Left lung (tissue), 14 donors: ENCODE measurements at regions of chr15 and their contacts with region 1.

Region 1: GRCh38 chr15:71437404-71438318 is 322.4 kb downstream of the THSD4 start:
- DNase-seq: peak in 1 of 4 donors; percentile 67
- ATAC-seq: peak; percentile 96
- H3K4me3 ChIP-seq: no peak overlapping the region
- H3K27ac ChIP-seq: peak overlapping the region; percentile 6 to 36
- H3K4me1 ChIP-seq: peaks cover 5 to 13% of the 10 kb centered on the region in 2 donors
- H3K27me3 ChIP-seq: no peaks in the 10 kb centered on the region
- CTCF ChIP-seq: no peak

Region 2: GRCh38 chr15:70892002-70892914 is 545.4 kb before region 1 on chr15 and contains the starts of genes LRRC49 and THAP10:
- intact Hi-C with region 1: no loop called
- DNase-seq: peak; percentile 87 to 94 (median 91)
- ATAC-seq: peak; percentile 96
- H3K4me3 ChIP-seq: peak within 1 kb of the TSS; percentile 61 to 97
- H3K27ac ChIP-seq: peak within 1 kb of the TSS; percentile 48 to 70
- H3K4me1 ChIP-seq: peaks cover 0 to 13% of the 10 kb centered on the region in 2 donors
- H3K27me3 ChIP-seq: peaks cover 0 to 8% of the 10 kb centered on the region in 2 donors
- CTCF ChIP-seq: no peak
- polyA plus RNA-seq, gene LRRC49: 17.5 to 24.1 (median 20.0) TPM
- polyA plus RNA-seq, gene THAP10: 5.3 to 7.6 (median 6.2) TPM

Region 3: DNA sequence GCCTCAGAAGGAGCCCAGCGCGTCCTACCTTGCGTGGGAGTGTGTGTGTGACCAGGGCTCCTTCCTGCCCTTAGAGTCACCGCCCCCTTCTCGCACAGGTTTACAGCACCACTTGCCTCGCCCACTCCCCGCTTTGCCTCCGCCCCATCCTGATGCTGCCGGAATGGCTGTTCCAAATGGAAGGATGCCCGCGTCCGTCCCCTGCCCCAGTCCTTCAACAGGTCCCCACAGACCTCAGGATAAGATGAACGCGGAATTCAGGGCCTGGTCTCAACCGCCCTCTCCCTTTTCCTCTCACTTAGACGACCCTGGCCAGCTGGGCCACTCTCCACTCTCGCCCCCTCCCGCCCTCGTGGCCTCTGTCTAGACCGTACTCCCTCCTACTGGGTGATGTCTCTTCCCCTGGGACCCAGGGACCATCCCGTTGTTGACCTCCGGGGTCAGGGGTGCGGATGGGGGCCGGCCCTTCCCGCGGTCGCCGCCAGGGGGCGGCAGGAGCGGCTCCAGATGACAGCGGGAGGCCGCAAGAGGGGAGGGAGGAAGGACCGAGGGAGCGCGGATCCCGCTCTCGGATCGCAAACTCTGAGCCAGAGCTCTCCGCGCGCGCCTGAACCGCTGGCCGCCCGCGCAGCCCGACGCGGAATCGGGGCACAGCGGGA is 322.6 kb before region 1 on chr15 and contains the start of gene THSD4:
- intact Hi-C with region 1: loop called in 1 of 2 experiments (anchors 5 kb)
- DNase-seq: peak; percentile 81 to 90 (median 84)
- ATAC-seq: peak; percentile 83
- H3K4me3 ChIP-seq: peak within 1 kb of the TSS; percentile 38 to 57
- H3K27ac ChIP-seq: peak within 1 kb of the TSS; percentile 82 to 89
- H3K4me1 ChIP-seq: peaks cover 0 to 19% of the 10 kb centered on the region in 2 donors
- H3K27me3 ChIP-seq: peaks cover 0 to 46% of the 10 kb centered on the region in 2 donors
- CTCF ChIP-seq: peak; percentile 89 to 98
- polyA plus RNA-seq, gene THSD4: 15.7 to 23.7 (median 17.8) TPM

Region 4: GRCh38 chr15:71386448-71387236 is 51.0 kb before region 1 on chr15:
- intact Hi-C with region 1: loop called in 1 of 2 experiments (anchors 10 kb)
- DNase-seq: no peak
- ATAC-seq: peak; percentile 82
- H3K4me3 ChIP-seq: no peak overlapping the region
- H3K27ac ChIP-seq: no peak overlapping the region
- H3K4me1 ChIP-seq: peaks cover 0 to 14% of the 10 kb centered on the region in 2 donors
- H3K27me3 ChIP-seq: peaks cover 0 to 3% of the 10 kb centered on the region in 2 donors
- CTCF ChIP-seq: peak in 1 of 2 donors; percentile 38